OCI-LY7 (cell line): ENCODE measurements at regions of chr6 and their contacts with region 1.

Region 1: DNA sequence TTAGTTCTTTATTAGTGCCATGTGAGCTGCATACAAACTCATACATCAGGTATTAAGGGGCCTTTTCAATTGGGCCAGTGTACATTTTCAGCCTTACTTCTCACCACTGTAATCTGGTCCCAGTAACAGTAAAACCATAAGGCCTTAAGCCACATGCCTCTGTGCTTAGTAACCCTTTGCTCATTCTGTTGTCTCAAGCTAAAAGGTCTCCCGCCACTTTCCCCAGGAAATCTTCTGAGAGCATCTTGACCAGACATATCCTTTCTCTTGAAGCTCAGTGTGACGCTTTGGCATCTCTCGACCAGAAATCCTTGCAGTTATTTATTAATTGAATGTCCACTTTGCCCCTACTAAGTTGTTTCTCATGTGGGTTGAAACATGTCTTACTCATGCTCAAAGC is 68.0 kb downstream of the CYP39A1 start:
- DNase-seq: no peak
- H3K4me3 ChIP-seq: no peak overlapping the region
- H3K27ac ChIP-seq: no peak overlapping the region
- H3K4me1 ChIP-seq: no peaks in the 10 kb centered on the region
- CTCF ChIP-seq: no peak

Region 2: GRCh38 chr6:46510651-46511050 is 73.9 kb before region 1 on chr6:
- CTCF ChIA-PET with region 1: no interaction called
- POLR2A ChIA-PET with region 1: no interaction called
- intact Hi-C with region 1: no loop called
- DNase-seq: no peak
- H3K4me3 ChIP-seq: no peak overlapping the region
- H3K27ac ChIP-seq: no peak overlapping the region
- H3K4me1 ChIP-seq: no peaks in the 10 kb centered on the region
- CTCF ChIP-seq: no peak

Region 3: DNA sequence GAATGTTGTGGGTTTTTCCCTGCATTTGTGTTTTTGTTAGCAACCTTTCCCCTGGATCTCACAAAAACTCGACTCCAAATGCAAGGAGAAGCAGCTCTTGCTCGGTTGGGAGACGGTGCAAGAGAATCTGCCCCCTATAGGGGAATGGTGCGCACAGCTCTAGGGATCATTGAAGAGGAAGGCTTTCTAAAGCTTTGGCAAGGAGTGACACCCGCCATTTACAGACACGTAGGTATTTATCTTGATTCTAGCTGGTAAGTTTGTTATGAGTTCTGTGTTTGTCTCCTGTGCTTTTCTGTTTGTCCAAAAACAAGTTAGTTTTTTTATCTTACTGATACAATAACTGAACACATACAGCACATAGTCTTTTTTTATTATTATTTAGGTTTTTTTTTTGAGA is 71.2 kb after region 1 on chr6:
- CTCF ChIA-PET with region 1: no interaction called
- POLR2A ChIA-PET with region 1: no interaction called
- intact Hi-C with region 1: no loop called
- DNase-seq: peak; percentile 78
- H3K4me3 ChIP-seq: peak overlapping the region; percentile 85
- H3K27ac ChIP-seq: peak overlapping the region; percentile 96
- H3K4me1 ChIP-seq: peaks cover 6% of the 10 kb centered on the region
- CTCF ChIP-seq: peak; percentile 88

Region 4: GRCh38 chr6:47964969-47965368 is 1380.4 kb after region 1 on chr6:
- CTCF ChIA-PET with region 1: no interaction called
- POLR2A ChIA-PET with region 1: interaction called, 10 read pairs
- intact Hi-C with region 1: no loop called
- DNase-seq: no peak
- H3K4me3 ChIP-seq: no peak overlapping the region
- H3K27ac ChIP-seq: no peak overlapping the region
- H3K4me1 ChIP-seq: no peaks in the 10 kb centered on the region
- CTCF ChIP-seq: no peak